CD4-positive, alpha-beta T cell (primary cell): ENCODE measurements at regions of chr20 and their contacts with region 1.

Region 1: DNA sequence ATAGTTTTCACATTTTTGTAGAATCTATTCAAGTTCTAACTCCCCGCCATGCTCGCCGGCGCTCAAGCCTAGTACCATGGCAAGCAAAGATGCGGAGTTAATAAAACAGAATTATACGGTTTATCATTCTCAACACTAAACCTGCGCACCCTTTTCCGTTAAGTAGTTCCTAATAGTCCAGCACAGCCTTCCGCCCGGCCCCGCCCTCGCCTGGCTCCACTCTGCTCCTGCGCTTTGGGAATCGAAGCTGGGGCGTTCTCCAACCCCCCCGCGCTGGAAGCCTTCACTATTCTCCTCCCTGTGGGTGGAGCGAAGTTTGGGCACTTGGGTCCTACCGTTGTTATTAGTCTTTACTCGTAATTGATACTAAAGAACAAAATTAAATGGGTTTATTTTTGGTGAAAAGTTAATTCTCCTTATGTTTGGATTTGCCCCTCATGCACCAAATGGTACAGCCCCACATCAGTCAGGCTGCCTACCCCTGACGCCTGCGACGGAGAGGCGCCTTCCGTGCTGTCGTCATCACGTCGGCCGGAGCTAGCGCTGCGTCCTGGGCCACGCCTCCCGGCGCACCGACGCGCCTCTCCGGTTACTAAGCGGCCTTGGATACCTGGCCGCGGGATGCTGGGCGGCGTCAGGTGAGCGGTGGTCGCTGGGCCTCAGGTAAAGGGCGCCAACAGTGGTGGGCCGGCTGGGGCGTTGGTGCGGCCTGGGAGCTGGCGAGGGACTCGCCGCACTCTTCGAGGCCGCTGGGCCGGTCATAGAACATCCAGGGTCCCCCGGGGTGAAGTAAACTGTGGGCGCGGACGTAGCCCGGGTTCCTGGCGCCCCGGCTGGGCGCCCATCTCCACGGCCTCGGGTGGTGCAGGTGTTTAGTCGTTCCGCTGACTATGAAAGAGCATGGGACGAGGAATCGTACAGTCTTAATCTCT is at the start of gene IFT52:
- DNase-seq: peak; percentile 77 to 96 (median 86)
- ATAC-seq: peak; percentile 95
- H3K4me3 ChIP-seq: peak within 1 kb of the TSS; percentile 79
- H3K4me3 Mint-ChIP-seq: peak within 1 kb of the TSS; percentile 86
- H3K27ac ChIP-seq: peak within 1 kb of the TSS; percentile 69 to 95
- H3K27ac Mint-ChIP-seq: peak within 1 kb of the TSS; percentile 91
- H3K4me1 ChIP-seq: peaks cover 15% of the 10 kb centered on the region
- H3K4me1 Mint-ChIP-seq: peaks cover 18% of the 10 kb centered on the region
- H3K27me3 ChIP-seq: no peaks in the 10 kb centered on the region
- H3K27me3 Mint-ChIP-seq: peaks cover 6% of the 10 kb centered on the region
- CTCF ChIP-seq: no peak
- total RNA-seq, gene IFT52: 13.7 to 15.5 TPM

Region 2: GRCh38 chr20:43306837-43307236 is 283.8 kb before region 1 on chr20:
- CTCF ChIA-PET with region 1: no interaction called
- POLR2A ChIA-PET with region 1: no interaction called
- intact Hi-C with region 1: no loop called
- DNase-seq: no peak
- ATAC-seq: no peak
- H3K4me3 ChIP-seq: no peak overlapping the region
- H3K4me3 Mint-ChIP-seq: no peak overlapping the region
- H3K27ac ChIP-seq: no peak overlapping the region
- H3K27ac Mint-ChIP-seq: no peak overlapping the region
- H3K4me1 ChIP-seq: no peaks in the 10 kb centered on the region
- H3K4me1 Mint-ChIP-seq: no peaks in the 10 kb centered on the region
- H3K27me3 ChIP-seq: peaks cover 0 to 1% of the 10 kb centered on the region in 2 experiments
- H3K27me3 Mint-ChIP-seq: peaks cover 15% of the 10 kb centered on the region
- CTCF ChIP-seq: no peak

Region 3: DNA sequence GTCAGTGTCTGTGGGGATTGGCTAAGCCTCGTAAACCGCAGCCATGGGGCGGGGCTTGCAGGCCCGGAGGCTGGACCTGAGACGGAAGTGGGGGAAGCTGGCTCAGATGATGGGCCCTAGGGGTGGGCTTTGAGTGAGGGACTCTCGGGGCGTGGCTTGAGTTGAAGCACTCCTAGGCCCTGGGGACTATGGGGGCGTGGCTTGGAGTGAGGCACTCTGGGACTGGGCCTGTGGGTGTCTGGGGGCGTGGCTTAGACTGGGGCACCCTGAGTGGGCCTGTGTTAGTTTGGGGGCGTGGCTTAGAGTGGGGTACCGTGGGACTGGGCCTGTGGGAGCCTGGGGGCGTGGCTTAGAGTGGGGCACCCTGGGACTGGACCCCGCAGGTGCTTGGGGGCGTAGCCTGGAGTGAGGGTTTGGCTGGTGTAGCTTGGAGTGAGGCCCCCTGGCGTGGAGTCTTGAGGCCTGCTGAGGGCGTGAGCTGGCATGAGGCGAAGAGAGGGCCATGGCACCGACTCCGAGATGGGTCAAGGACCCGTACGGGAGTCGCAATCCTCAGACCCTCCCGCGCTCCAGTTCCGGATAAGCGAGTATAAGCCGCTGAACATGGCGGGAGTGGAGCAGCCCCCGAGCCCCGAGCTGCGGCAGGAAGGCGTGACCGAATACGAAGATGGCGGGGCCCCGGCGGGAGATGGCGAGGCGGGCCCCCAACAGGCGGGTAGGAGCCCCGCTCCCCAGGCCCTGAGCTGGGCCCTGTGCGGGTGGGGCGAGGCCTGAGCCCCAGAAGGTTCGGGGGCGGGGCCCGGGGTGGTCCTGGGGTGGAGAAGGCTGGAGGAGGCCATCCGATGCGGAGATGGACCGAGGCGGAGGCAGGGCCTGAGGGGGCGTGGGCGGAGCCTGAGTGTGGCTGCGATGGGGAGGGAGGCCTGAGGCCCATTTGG is 76.3 kb before region 1 on chr20:
- CTCF ChIA-PET with region 1: no interaction called
- POLR2A ChIA-PET with region 1: interaction called, 8 read pairs
- intact Hi-C with region 1: loop called in 1 of 2 experiments (anchors 2 kb)
- DNase-seq: peak; percentile 77 to 98 (median 86)
- ATAC-seq: peak; percentile 92
- H3K4me3 ChIP-seq: peak overlapping the region; percentile 65
- H3K4me3 Mint-ChIP-seq: peak overlapping the region; percentile 91
- H3K27ac ChIP-seq: peak overlapping the region in 1 of 2 donors; percentile 29
- H3K27ac Mint-ChIP-seq: peak overlapping the region; percentile 80
- H3K4me1 ChIP-seq: peaks cover 16% of the 10 kb centered on the region
- H3K4me1 Mint-ChIP-seq: peaks cover 25% of the 10 kb centered on the region
- H3K27me3 ChIP-seq: peaks cover 0 to 2% of the 10 kb centered on the region in 2 experiments
- H3K27me3 Mint-ChIP-seq: peaks cover 3% of the 10 kb centered on the region
- CTCF ChIP-seq: no peak

Region 4: GRCh38 chr20:43666376-43667328 is 76.0 kb after region 1 on chr20 and contains the start of gene MYBL2:
- CTCF ChIA-PET with region 1: interaction called, 3 read pairs
- POLR2A ChIA-PET with region 1: no interaction called
- intact Hi-C with region 1: loop called in 1 of 2 experiments (anchors 2 kb)
- DNase-seq: peak; percentile 50 to 86 (median 64)
- ATAC-seq: peak; percentile 96
- H3K4me3 ChIP-seq: peak within 1 kb of the TSS; percentile 61
- H3K4me3 Mint-ChIP-seq: peak within 1 kb of the TSS; percentile 58
- H3K27ac ChIP-seq: no peak within 1 kb of the TSS
- H3K27ac Mint-ChIP-seq: no peak within 1 kb of the TSS
- H3K4me1 ChIP-seq: peaks cover 15% of the 10 kb centered on the region
- H3K4me1 Mint-ChIP-seq: no peaks in the 10 kb centered on the region
- H3K27me3 ChIP-seq: peaks cover 16 to 24% of the 10 kb centered on the region in 2 experiments
- H3K27me3 Mint-ChIP-seq: peaks cover 27% of the 10 kb centered on the region
- CTCF ChIP-seq: no peak
- total RNA-seq, gene MYBL2: 0.56 to 0.69 TPM